ENCODE measurements at regions of chr1 and their contacts with region 1.

Region 1: DNA sequence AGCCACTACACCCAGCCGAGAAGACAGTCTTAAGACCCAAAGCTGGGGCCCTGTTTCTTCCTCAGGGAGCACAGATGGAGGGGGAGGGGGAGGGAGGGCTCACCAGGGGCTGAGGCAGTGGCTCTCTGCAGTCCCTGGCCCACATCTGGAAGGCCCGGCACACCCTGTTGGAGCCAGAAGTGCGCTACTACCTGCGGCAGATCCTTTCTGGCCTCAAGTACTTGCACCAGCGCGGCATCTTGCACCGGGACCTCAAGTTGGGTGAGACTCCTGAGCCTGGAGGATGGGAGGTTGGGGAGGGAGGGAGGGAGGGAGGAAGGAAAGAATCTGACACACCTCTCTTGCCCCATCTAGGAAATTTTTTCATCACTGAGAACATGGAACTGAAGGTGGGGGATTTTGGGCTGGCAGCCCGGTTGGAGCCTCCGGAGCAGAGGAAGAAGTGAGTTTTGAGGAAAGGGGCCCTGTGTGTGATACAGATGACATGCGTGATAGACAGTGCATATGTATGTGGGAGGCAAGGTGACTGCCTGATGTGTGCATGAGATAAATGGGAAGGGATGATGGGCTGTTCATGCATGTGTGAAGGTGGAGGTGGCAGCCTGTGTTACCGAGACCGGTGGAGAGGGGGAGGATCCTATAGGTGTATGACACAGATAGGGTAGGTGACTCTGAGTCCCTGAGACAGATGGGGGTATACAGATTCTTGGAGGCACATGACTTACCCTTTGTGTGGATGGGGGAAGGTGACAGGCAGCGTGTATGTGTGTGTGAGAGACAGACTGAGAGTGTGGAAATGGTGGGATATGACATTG is 1.5 kb downstream of the PLK3 start:
- DNase-seq: no peak
- H3K27ac ChIP-seq: peak overlapping the region; percentile 99
- CTCF ChIP-seq: no peak

Region 2: DNA sequence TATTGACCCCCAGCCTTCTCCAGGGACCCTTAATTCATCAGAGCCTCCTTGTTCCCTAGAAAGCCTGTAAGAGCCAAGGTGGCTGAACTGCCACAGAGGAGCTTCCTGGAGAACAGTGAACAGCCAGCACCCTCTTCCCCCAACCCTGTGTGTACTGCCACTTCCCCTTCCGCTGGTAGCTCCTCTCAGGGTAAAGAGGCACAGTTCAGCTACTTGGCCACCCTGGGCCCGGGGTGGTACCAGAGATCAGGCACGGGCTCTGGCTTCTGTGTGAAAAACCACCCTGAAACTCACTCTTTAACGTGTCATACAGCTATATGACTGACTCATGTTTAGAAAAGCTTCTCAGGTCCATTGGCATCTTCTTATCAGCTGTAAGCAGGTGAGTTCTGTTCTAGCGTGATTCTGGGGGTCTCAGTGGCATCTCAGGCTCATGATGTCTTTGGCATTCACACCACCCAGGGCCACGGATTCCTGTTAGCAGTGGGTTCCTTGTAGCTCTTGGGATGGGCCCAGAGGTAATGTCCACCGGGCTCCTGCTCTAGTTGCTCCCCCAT is 104.8 kb before region 1 on chr1:
- CTCF ChIA-PET with region 1: no interaction called
- POLR2A ChIA-PET with region 1: no interaction called
- DNase-seq: no peak
- H3K27ac ChIP-seq: no peak overlapping the region
- CTCF ChIP-seq: no peak

Region 3: DNA sequence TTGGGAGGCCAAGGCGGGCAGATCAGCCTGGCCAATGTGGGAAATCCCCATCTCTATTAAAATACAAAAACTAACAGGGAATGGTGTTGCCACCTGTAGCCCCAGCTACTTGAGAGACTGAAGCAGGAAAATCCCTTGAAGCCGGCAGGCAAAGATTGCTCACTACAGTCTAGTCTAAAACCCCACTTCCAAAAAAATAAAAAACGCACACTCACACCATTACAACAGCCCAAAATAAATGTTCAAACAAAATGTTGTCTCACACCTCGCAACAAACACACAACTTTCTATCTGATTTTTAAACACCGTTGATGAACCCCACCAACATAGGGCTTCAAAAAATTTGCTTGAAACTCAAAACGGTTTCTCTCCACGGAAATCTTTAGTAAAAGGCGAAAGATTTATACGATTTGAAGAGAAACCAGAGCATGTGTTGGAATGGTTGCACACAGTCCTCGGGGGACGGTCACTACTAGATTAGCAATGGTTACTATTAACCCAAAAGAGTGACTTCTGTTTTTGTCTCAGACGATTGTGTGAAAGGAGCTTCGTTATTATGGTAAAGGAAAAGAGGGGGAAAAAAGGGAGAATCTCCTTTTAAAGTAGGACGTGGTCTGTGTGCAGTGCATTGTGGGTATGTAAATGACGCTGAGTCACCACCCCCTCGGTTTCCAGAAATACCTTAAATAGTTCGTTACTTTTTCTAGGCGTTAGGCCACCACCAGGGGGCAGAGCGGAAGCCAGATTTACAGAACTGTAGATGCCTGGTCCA is 70.8 kb before region 1 on chr1 and contains the start of gene RNU5D-1:
- CTCF ChIA-PET with region 1: interaction called, 10 read pairs
- POLR2A ChIA-PET with region 1: no interaction called
- DNase-seq: peak; percentile 91
- H3K27ac ChIP-seq: peak within 1 kb of the TSS; percentile 91
- CTCF ChIP-seq: peak; percentile 82

Measured in RWPE1 (cell line).